B cell (primary cell): ENCODE measurements at regions of chr1 and their contacts with region 1.

Region 1: DNA sequence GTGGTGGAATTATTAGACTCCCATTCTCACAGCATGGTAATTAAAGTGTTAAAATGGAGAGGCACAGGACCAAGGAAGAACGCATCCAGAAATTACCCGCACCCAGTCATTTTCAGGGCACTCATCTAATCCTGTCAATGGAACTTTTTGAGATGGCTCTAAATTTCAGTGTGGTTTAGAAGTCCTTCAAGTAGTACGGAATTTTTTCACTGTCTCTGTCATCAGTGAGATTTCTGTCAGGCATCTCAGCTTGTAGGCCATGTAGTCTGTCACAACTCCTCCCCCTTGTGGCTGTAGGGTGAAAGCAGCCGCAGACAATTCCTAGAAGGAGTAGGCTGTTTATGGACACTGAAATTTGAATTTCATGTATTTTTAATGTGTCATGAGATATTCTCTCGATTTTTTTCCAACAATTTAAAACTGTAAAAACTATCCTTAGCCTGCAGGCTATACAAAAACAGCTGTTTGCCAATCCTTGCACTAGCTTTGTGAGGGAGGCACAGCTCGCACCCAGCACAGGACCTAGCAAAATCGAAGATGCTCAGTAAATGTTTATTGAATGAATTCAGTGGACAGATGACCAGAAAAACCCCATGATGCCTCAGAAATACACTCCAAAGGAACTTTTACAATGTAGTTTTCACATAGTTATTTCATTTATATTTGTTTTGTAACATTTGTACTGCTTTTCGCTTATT is 6.6 kb upstream of the NUP133 start:
- DNase-seq: peak; percentile 76
- ATAC-seq: peak; percentile 85
- H3K4me3 ChIP-seq: no peak overlapping the region
- H3K4me3 Mint-ChIP-seq: no peak overlapping the region
- H3K27ac ChIP-seq: no peak overlapping the region
- H3K27ac Mint-ChIP-seq: no peak overlapping the region
- H3K4me1 ChIP-seq: peaks cover 0 to 4% of the 10 kb centered on the region in 2 donors
- H3K4me1 Mint-ChIP-seq: peaks cover 2% of the 10 kb centered on the region
- H3K27me3 ChIP-seq: no peaks in the 10 kb centered on the region
- H3K27me3 Mint-ChIP-seq: no peaks in the 10 kb centered on the region
- CTCF ChIP-seq: peak; percentile 84

Region 2: GRCh38 chr1:228664399-228664914 is 850.3 kb before region 1 on chr1:
- CTCF ChIA-PET with region 1: interaction called, 6 read pairs
- POLR2A ChIA-PET with region 1: no interaction called
- intact Hi-C with region 1: loop called (anchors 1 kb)
- DNase-seq: peak; percentile 79
- ATAC-seq: peak; percentile 43
- H3K4me3 ChIP-seq: no peak overlapping the region
- H3K4me3 Mint-ChIP-seq: no peak overlapping the region
- H3K27ac ChIP-seq: no peak overlapping the region
- H3K27ac Mint-ChIP-seq: no peak overlapping the region
- H3K4me1 ChIP-seq: no peaks in the 10 kb centered on the region
- H3K4me1 Mint-ChIP-seq: no peaks in the 10 kb centered on the region
- H3K27me3 ChIP-seq: peaks cover 0 to 8% (median 2%) of the 10 kb centered on the region in 4 experiments
- H3K27me3 Mint-ChIP-seq: peaks cover 22% of the 10 kb centered on the region
- CTCF ChIP-seq: peak; percentile 95

Region 3: DNA sequence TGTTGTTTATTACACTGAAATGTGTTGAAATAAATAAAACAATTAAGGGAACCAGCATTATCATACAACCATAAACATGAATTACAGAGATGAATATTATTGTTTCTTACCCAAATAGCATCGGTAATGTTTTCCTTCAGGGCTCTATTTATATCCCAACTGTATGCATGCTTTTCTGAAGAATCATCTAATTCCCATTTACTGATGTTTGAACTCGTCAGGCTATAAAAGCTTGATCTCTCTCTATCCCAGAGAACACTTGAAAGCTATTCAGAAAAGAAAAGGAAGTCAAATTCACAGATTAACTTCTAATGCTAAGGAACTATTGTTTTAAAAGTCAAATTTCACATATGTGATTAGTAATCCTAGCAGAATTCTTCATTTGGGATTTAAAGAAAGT is 18.9 kb before region 1 on chr1:
- CTCF ChIA-PET with region 1: interaction called, 12 read pairs
- POLR2A ChIA-PET with region 1: no interaction called
- intact Hi-C with region 1: no loop called
- DNase-seq: no peak
- ATAC-seq: no peak
- H3K4me3 ChIP-seq: no peak overlapping the region
- H3K4me3 Mint-ChIP-seq: no peak overlapping the region
- H3K27ac ChIP-seq: no peak overlapping the region
- H3K27ac Mint-ChIP-seq: no peak overlapping the region
- H3K4me1 ChIP-seq: no peaks in the 10 kb centered on the region
- H3K4me1 Mint-ChIP-seq: no peaks in the 10 kb centered on the region
- H3K27me3 ChIP-seq: no peaks in the 10 kb centered on the region
- H3K27me3 Mint-ChIP-seq: no peaks in the 10 kb centered on the region
- CTCF ChIP-seq: no peak

Region 4: DNA sequence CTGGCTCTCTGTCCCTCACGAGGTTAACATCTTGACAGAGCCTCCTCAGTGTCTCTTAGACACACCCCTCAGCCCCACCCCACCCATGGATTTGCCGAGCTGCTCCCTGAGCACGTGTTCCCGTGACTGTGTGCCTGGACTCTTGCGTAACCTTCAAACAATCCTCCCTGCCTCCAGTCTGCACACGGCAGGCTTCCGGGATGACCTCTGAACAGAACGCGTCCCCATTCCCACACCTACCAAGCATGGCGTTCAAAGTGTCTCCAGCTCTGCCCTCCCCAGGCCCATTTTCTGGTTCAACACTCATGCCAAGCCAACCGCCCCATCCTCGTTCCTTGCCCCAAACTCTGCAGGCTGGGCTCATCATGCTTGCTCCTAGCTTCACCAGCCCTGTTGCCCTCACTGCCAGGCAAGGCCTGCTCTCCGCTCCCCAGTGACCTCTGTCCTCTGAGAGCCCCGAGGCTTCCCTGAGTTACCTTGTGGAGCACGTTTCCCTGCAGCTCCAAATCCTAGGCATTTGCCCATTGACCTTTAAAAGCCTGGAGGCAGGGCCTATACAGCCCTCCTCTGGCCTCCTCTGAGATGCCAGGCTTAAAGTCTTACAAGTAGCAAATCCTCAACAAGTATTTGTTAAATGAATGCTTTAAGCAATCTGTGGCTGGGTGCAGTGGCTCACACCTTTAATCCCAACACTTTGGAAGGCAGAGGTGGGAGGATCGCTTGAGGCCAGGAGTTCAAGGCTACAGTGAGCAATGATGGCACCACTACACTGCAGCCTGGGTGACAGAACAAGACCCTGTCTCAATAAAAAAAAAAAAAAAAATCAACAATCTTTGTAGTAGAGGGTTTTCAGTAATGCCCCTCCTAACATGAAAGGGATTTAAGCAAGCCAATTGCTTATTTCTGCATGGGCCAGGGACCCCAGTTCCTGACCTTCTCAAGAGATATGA is 1194.2 kb after region 1 on chr1:
- CTCF ChIA-PET with region 1: no interaction called
- POLR2A ChIA-PET with region 1: no interaction called
- intact Hi-C with region 1: no loop called
- DNase-seq: no peak
- ATAC-seq: no peak
- H3K4me3 ChIP-seq: no peak overlapping the region
- H3K4me3 Mint-ChIP-seq: no peak overlapping the region
- H3K27ac ChIP-seq: no peak overlapping the region
- H3K27ac Mint-ChIP-seq: no peak overlapping the region
- H3K4me1 ChIP-seq: no peaks in the 10 kb centered on the region
- H3K4me1 Mint-ChIP-seq: no peaks in the 10 kb centered on the region
- H3K27me3 ChIP-seq: no peaks in the 10 kb centered on the region
- H3K27me3 Mint-ChIP-seq: peaks cover 22% of the 10 kb centered on the region
- CTCF ChIP-seq: no peak